AG04450 (cell line): ENCODE measurements at regions of chr1 and their contacts with region 1.

Region 1: DNA sequence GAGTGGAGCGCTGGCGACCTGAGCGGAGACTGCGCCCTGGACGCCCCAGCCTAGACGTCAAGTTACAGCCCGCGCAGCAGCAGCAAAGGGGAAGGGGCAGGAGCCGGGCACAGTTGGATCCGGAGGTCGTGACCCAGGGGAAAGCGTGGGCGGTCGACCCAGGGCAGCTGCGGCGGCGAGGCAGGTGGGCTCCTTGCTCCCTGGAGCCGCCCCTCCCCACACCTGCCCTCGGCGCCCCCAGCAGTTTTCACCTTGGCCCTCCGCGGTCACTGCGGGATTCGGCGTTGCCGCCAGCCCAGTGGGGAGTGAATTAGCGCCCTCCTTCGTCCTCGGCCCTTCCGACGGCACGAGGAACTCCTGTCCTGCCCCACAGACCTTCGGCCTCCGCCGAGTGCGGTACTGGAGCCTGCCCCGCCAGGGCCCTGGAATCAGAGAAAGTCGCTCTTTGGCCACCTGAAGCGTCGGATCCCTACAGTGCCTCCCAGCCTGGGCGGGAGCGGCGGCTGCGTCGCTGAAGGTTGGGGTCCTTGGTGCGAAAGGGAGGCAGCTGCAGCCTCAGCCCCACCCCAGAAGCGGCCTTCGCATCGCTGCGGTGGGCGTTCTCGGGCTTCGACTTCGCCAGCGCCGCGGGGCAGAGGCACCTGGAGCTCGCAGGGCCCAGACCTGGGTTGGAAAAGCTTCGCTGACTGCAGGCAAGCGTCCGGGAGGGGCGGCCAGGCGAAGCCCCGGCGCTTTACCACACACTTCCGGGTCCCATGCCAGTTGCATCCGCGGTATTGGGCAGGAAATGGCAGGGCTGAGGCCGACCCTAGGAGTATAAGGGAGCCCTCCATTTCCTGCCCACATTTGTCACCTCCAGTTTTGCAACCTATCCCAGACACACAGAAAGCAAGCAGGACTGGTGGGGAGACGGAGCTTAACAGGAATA is 4.2 kb downstream of the TFAP2E start:
- DNase-seq: no peak
- H3K4me3 ChIP-seq: no peak overlapping the region
- H3K27ac ChIP-seq: no peak overlapping the region
- H3K27me3 ChIP-seq: peaks cover 49% of the 10 kb centered on the region
- CTCF ChIP-seq: no peak

Region 2: GRCh38 chr1:35287807-35288640 is 289.3 kb before region 1 on chr1:
- CTCF ChIA-PET with region 1: no interaction called
- POLR2A ChIA-PET with region 1: no interaction called
- DNase-seq: no peak
- H3K4me3 ChIP-seq: no peak overlapping the region
- H3K27ac ChIP-seq: peak overlapping the region; percentile 54
- H3K27me3 ChIP-seq: no peaks in the 10 kb centered on the region
- CTCF ChIP-seq: no peak

Region 3: DNA sequence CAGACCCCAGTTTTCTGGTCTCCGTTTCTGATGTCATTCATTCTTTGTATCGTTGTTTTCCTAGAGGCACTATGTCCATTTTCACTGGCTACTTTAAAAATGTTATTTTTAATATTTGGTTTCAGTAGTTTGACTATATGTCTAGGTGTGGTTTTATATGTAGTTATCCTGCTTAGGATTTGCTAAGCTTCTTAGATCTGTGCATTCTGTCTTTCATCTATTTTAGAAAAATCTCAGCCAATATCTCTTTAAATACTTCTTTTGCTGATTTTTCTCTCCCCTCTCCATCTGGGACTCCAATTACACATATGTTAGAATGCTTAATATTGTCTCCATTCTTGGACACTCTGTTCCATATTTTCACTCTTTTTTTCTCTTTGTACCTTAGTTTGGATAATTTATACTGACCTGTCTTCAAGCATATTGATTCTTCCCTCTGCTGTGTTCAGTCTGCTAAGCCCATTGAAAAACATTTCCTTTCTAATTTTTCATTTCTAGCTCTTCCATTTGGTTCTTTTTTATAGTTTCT is 205.8 kb after region 1 on chr1:
- CTCF ChIA-PET with region 1: interaction called, 13 read pairs
- POLR2A ChIA-PET with region 1: no interaction called
- DNase-seq: no peak
- H3K4me3 ChIP-seq: no peak overlapping the region
- H3K27ac ChIP-seq: no peak overlapping the region
- H3K27me3 ChIP-seq: no peaks in the 10 kb centered on the region
- CTCF ChIP-seq: no peak